ENCODE measurements at regions of chr7 and their contacts with region 1.

Region 1: GRCh38 chr7:139340037-139340807 is 915 bp upstream of the FMC1 start:
- DNase-seq: peak; percentile 100
- ATAC-seq: peak; percentile 77
- H3K4me3 ChIP-seq: peak overlapping the region; percentile 73 to 99 (median 94)
- H3K4me3 Mint-ChIP-seq: peak overlapping the region; percentile 96
- H3K27ac ChIP-seq: peak overlapping the region; percentile 97 to 98
- H3K27ac Mint-ChIP-seq: peak overlapping the region; percentile 100
- H3K4me1 ChIP-seq: peaks cover 10 to 23% of the 10 kb centered on the region in 2 donors
- H3K4me1 Mint-ChIP-seq: peaks cover 30% of the 10 kb centered on the region
- H3K27me3 ChIP-seq: no peaks in the 10 kb centered on the region
- H3K27me3 Mint-ChIP-seq: peaks cover 5% of the 10 kb centered on the region
- CTCF ChIP-seq: peak; percentile 67

Region 2: DNA sequence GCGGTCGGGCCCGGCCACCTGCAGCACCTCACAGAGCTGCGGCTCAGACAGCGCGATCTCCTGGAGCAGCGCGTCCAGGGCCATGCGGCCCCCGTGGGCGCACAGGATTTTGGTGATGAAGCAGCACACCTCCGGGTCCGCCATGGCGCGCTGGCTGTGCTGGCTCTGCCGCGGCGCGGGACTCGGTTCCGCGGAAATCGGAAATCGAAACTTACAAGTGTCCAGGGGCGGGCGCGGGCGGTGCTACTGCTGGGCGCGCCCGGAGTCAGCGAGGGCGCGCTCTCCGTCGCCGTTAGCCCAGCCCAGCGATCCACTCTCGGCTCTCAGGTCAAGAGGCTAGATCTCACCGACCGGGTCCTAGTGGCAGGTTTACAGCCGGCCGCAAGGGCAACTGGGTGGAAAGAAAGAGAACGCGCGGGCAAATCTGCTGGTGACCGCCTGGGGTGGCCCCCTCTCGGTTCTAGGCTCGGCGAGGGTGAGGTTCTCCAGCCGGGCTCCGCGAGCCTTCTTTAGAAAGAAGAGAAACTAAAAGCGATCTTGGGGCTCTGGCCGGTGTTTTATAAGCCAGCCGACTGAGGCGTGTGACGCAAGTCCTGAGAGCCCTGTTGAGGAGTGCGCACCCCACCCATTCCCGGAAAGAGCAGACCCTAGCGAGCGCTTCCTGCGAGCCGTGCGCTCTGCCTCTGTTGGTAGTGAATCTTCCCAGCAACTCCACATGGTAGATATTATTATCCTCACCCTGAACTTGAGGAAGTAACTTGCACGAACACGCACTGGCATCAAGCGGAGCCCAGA is 230.8 kb before region 1 on chr7 and contains the start of gene ZC3HAV1:
- CTCF ChIA-PET with region 1: no interaction called
- POLR2A ChIA-PET with region 1: interaction called, 3 read pairs
- intact Hi-C with region 1: loop called (anchors 1 kb)
- DNase-seq: peak; percentile 94
- ATAC-seq: peak; percentile 78
- H3K4me3 ChIP-seq: peak within 1 kb of the TSS; percentile 85 to 98 (median 95)
- H3K4me3 Mint-ChIP-seq: peak within 1 kb of the TSS; percentile 88
- H3K27ac ChIP-seq: peak within 1 kb of the TSS; percentile 90 to 96
- H3K27ac Mint-ChIP-seq: peak within 1 kb of the TSS; percentile 99
- H3K4me1 ChIP-seq: peaks cover 18 to 26% of the 10 kb centered on the region in 2 donors
- H3K4me1 Mint-ChIP-seq: peaks cover 34% of the 10 kb centered on the region
- H3K27me3 ChIP-seq: no peaks in the 10 kb centered on the region
- H3K27me3 Mint-ChIP-seq: no peaks in the 10 kb centered on the region
- CTCF ChIP-seq: no peak
- total RNA-seq, gene ZC3HAV1: 101 TPM in 2 replicates

Region 3: GRCh38 chr7:139169801-139170200 is 170.4 kb before region 1 on chr7:
- CTCF ChIA-PET with region 1: no interaction called
- POLR2A ChIA-PET with region 1: no interaction called
- intact Hi-C with region 1: no loop called
- DNase-seq: no peak
- ATAC-seq: no peak
- H3K4me3 ChIP-seq: no peak overlapping the region
- H3K4me3 Mint-ChIP-seq: no peak overlapping the region
- H3K27ac ChIP-seq: no peak overlapping the region
- H3K27ac Mint-ChIP-seq: no peak overlapping the region
- H3K4me1 ChIP-seq: no peaks in the 10 kb centered on the region
- H3K4me1 Mint-ChIP-seq: no peaks in the 10 kb centered on the region
- H3K27me3 ChIP-seq: no peaks in the 10 kb centered on the region
- H3K27me3 Mint-ChIP-seq: no peaks in the 10 kb centered on the region
- CTCF ChIP-seq: no peak

Region 4: GRCh38 chr7:139230774-139231512 is 109.3 kb before region 1 on chr7 and contains the start of gene UBN2:
- CTCF ChIA-PET with region 1: interaction called, 4 read pairs
- POLR2A ChIA-PET with region 1: interaction called, 3 read pairs
- intact Hi-C with region 1: loop called (anchors 1 kb)
- DNase-seq: peak; percentile 95
- ATAC-seq: peak; percentile 80
- H3K4me3 ChIP-seq: peak within 1 kb of the TSS; percentile 77 to 96 (median 90)
- H3K4me3 Mint-ChIP-seq: peak within 1 kb of the TSS; percentile 96
- H3K27ac ChIP-seq: peak within 1 kb of the TSS; percentile 60 to 90
- H3K27ac Mint-ChIP-seq: peak within 1 kb of the TSS; percentile 95
- H3K4me1 ChIP-seq: peaks cover 12 to 14% of the 10 kb centered on the region in 2 donors
- H3K4me1 Mint-ChIP-seq: peaks cover 25% of the 10 kb centered on the region
- H3K27me3 ChIP-seq: peaks cover 0 to 3% (median 0%) of the 10 kb centered on the region in 4 experiments
- H3K27me3 Mint-ChIP-seq: peaks cover 7% of the 10 kb centered on the region
- CTCF ChIP-seq: no peak
- total RNA-seq, gene UBN2: 33.4 and 36.1 TPM in 2 replicates

Region 5: GRCh38 chr7:139382439-139382838 is 42.2 kb after region 1 on chr7:
- CTCF ChIA-PET with region 1: no interaction called
- POLR2A ChIA-PET with region 1: no interaction called
- intact Hi-C with region 1: no loop called
- DNase-seq: no peak
- ATAC-seq: no peak
- H3K4me3 ChIP-seq: no peak overlapping the region
- H3K4me3 Mint-ChIP-seq: no peak overlapping the region
- H3K27ac ChIP-seq: no peak overlapping the region
- H3K27ac Mint-ChIP-seq: no peak overlapping the region
- H3K4me1 ChIP-seq: peaks cover 0 to 6% of the 10 kb centered on the region in 2 donors
- H3K4me1 Mint-ChIP-seq: peaks cover 2% of the 10 kb centered on the region
- H3K27me3 ChIP-seq: no peaks in the 10 kb centered on the region
- H3K27me3 Mint-ChIP-seq: no peaks in the 10 kb centered on the region
- CTCF ChIP-seq: no peak

Region 6: GRCh38 chr7:139393621-139394211 is 53.5 kb after region 1 on chr7:
- CTCF ChIA-PET with region 1: no interaction called
- POLR2A ChIA-PET with region 1: no interaction called
- intact Hi-C with region 1: no loop called
- DNase-seq: no peak
- ATAC-seq: no peak
- H3K4me3 ChIP-seq: no peak overlapping the region
- H3K4me3 Mint-ChIP-seq: no peak overlapping the region
- H3K27ac ChIP-seq: no peak overlapping the region
- H3K27ac Mint-ChIP-seq: no peak overlapping the region
- H3K4me1 ChIP-seq: no peaks in the 10 kb centered on the region
- H3K4me1 Mint-ChIP-seq: peaks cover 9% of the 10 kb centered on the region
- H3K27me3 ChIP-seq: no peaks in the 10 kb centered on the region
- H3K27me3 Mint-ChIP-seq: no peaks in the 10 kb centered on the region
- CTCF ChIP-seq: no peak

Region 7: DNA sequence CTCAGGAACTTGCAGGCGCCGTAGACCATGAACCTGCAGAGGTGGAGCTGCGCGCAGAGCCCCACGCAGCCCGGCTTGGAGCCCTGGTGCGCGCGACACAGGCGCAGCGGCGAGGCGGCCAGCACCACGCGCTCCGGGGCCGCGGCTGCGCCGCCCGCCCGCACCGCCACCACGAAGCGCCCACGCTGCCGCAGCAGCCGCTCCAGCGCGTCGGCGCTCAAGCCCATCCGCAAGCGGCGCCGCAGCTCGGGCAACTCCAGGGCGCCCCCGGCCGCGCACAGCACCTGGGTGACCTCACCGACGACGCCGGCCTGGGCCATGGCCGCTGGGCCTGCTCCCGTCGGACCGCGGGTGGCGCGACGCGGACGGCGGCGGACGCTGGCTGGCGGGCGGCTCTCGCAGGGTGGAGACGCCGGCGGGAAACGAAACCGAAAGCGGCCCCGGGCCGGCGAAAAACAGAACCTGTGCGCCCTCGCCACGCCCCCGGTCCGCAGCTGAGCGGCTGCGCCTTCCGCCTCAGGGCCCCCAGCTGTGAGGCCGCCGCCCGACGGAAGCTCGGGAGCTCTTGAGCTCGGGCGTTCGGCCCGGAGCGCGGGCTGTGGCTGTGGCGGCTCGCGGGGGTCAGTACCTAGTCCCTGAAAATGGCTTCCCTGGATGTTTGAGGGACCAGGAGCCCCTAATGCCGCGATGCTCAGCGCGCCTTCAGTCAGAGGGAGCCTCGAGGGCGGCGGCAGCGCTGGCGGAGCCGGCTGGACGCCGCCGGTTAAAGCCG is 722.5 kb after region 1 on chr7 and contains the start of gene PARP12:
- CTCF ChIA-PET with region 1: no interaction called
- POLR2A ChIA-PET with region 1: no interaction called
- intact Hi-C with region 1: loop called (anchors 2 kb)
- DNase-seq: peak; percentile 96
- ATAC-seq: peak; percentile 86
- H3K4me3 ChIP-seq: peak within 1 kb of the TSS; percentile 67 to 89 (median 84)
- H3K4me3 Mint-ChIP-seq: peak within 1 kb of the TSS; percentile 98
- H3K27ac ChIP-seq: peak within 1 kb of the TSS; percentile 86 to 93
- H3K27ac Mint-ChIP-seq: peak within 1 kb of the TSS; percentile 99
- H3K4me1 ChIP-seq: peaks cover 32 to 38% of the 10 kb centered on the region in 2 donors
- H3K4me1 Mint-ChIP-seq: peaks cover 43% of the 10 kb centered on the region
- H3K27me3 ChIP-seq: no peaks in the 10 kb centered on the region
- H3K27me3 Mint-ChIP-seq: no peaks in the 10 kb centered on the region
- CTCF ChIP-seq: no peak
- total RNA-seq, gene PARP12: 160 and 177 TPM in 2 replicates

Region 8: DNA sequence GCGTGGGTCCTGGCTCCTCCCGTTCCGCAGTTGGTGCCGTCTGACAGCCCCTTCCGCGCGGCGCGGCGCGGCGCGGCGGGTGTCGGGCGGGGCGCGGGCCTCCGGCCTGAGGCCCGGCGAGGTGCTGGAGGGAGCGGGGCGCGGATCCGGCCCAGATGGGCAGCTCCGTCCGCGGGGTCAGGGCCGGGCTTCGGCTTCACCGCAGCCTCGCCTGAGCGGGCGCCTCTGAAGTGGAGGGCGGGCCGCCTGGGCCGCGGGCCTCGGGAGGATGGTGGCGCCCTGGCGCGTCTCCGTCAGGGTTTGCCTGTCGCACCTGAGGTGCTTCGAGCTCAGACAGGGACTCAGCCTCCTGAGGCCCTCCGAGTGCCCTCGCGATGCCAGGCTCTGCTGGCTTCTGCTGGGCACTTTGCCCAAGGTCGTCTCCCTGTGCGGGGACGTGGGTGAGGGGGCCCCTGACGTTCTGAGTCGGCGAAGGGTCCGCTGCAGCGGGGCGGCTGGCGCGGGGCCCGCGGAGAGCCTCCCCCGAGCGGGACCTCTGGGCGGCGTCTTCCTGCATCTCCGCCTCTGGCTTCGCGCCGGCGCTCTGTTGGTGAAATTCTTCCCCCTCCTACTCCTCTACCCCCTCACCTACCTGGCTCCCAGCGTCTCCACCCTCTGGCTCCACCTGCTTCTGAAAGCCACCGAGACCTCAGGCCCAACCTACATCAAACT is 1333.0 kb after region 1 on chr7:
- CTCF ChIA-PET with region 1: no interaction called
- POLR2A ChIA-PET with region 1: no interaction called
- intact Hi-C with region 1: loop called (anchors 10 kb)
- DNase-seq: peak; percentile 83
- ATAC-seq: peak; percentile 55
- H3K4me3 ChIP-seq: peak overlapping the region; percentile 4 to 76 (median 70)
- H3K4me3 Mint-ChIP-seq: peak overlapping the region; percentile 87
- H3K27ac ChIP-seq: peak overlapping the region; percentile 48 to 79
- H3K27ac Mint-ChIP-seq: peak overlapping the region; percentile 91
- H3K4me1 ChIP-seq: peaks cover 46 to 54% of the 10 kb centered on the region in 2 donors
- H3K4me1 Mint-ChIP-seq: peaks cover 52% of the 10 kb centered on the region
- H3K27me3 ChIP-seq: no peaks in the 10 kb centered on the region
- H3K27me3 Mint-ChIP-seq: no peaks in the 10 kb centered on the region
- CTCF ChIP-seq: no peak